ENCODE measurements at regions of chr12 and their contacts with region 1.

Region 1: DNA sequence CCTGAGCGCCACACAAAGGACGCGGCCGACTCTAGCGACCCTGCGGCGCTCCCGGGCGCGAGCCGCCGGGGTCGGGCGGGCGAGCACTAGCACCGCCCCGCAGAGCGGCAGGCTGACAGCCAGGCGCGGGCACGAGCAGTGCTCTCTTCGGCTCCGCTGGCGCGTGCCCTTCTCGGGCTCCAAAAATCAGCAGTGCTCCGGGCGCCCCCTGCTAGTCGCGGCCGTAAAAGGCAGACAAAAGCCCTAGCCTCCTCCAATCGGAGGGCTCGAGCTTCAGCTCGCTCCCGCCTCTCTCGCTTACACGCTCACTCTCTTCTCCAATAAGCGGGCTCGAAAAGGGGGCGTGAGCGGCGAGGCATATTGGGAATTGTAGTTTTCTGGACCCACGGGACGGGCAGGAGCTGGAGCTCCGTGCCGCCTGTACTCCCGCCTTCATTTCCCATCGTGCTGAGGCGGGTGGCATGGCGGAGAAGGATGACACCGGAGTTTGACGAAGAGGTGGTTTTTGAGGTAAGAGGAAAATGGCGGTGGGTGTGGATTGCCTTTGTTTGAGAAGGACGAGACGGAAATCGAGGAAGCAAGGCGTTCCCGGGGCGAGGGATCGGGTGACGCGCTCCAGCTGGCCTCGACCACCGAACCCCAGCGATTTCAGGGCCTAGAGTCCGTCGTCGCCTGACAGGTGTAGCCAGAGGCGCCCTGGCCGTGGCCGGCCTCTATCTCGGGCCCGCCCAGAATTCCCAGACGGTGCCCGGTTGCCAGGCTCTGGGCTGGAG is at the starts of genes FGD6 and VEZT:
- DNase-seq: peak; percentile 96 to 98 (median 97)
- ATAC-seq: peak; percentile 93
- H3K4me3 ChIP-seq: peak within 1 kb of the TSS; percentile 70
- H3K27ac ChIP-seq: peak within 1 kb of the TSS; percentile 81
- H3K4me1 ChIP-seq: peaks cover 8 to 14% of the 10 kb centered on the region in 2 experiments
- H3K27me3 ChIP-seq: no peaks in the 10 kb centered on the region
- CTCF ChIP-seq: peak; percentile 78 to 94 (median 82)
- EP300 ChIP-seq: no peak
- POLR2A ChIP-seq: peak; percentile 85
- RAD21 ChIP-seq: peak; percentile 90 to 99
- polyA plus RNA-seq, gene FGD6: 1.5 to 2.1 TPM
- polyA plus RNA-seq, gene VEZT: 16.1 to 29.1 TPM

Region 2: GRCh38 chr12:95130096-95130495 is 87.5 kb before region 1 on chr12:
- CTCF ChIA-PET with region 1: no interaction called
- POLR2A ChIA-PET with region 1: no interaction called
- in situ Hi-C with region 1: loop called (anchors 5 kb)
- intact Hi-C with region 1: loop called (anchors 5 kb)
- DNase-seq: no peak
- ATAC-seq: no peak
- H3K4me3 ChIP-seq: no peak overlapping the region
- H3K27ac ChIP-seq: no peak overlapping the region
- H3K4me1 ChIP-seq: no peaks in the 10 kb centered on the region
- H3K27me3 ChIP-seq: no peaks in the 10 kb centered on the region
- CTCF ChIP-seq: no peak
- EP300 ChIP-seq: no peak
- POLR2A ChIP-seq: no peak
- RAD21 ChIP-seq: no peak

Region 3: DNA sequence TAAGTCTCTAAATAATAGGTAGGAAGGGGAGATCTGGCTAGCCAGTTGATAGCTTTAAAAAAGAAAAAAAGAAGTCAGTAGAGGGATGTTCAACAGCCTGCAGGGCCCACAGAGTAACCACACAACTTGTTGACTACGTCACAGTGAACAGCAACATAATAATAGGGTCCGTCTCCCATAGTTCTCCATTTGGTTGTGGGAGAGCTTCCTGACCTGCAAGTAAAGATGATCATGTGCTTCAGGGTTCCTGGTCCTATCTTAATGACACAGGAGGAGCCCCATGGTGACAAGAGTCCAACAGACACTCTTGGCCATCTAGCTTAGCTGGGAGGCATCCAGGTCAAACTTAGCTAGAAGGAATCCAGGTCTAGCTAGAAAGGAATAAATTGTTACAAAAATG is 36.5 kb before region 1 on chr12:
- CTCF ChIA-PET with region 1: no interaction called
- POLR2A ChIA-PET with region 1: no interaction called
- in situ Hi-C with region 1: no loop called
- intact Hi-C with region 1: loop called (anchors 2 kb)
- DNase-seq: peak; percentile 37 to 89 (median 60)
- ATAC-seq: peak; percentile 78
- H3K4me3 ChIP-seq: no peak overlapping the region
- H3K27ac ChIP-seq: peak overlapping the region; percentile 70
- H3K4me1 ChIP-seq: peaks cover 18 to 43% of the 10 kb centered on the region in 2 experiments
- H3K27me3 ChIP-seq: no peaks in the 10 kb centered on the region
- CTCF ChIP-seq: no peak
- EP300 ChIP-seq: peak; percentile 73; the same call in 1 of the 2 replicates
- POLR2A ChIP-seq: no peak
- RAD21 ChIP-seq: no peak

Region 4: DNA sequence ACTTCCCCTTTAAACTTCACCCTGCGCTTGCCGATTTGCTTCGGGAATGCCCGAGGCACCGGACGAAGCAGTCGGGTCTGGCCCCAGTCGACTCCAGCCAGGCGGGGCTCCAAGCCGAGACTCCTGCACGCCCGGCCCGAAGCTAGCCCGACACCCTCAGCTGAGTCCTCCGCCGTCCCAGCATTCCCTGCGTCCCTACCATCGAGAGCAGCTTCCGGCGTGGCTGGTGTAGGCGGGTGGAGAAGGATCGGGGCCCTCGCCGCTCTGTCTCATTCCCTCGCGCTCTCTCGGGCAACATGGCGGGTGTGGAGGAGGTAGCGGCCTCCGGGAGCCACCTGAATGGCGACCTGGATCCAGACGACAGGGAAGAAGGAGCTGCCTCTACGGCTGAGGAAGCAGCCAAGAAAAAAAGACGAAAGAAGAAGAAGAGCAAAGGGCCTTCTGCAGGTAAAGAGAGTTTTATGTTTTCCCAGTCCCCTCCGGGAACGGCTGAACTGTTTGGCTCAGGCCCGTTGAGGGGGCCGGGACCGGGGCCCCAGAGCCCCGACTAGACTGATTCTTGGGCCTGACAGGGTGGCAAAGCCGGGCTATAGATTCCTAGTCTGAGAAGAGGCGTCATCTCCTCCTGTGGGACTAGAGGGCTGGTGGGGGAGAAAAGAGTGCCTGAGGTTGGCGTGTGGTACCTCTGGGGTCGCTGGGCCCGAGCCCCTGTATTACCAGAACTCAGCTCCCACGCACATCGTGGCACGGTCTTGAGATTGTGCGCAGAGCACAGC is 256.5 kb after region 1 on chr12 and contains the start of gene METAP2:
- CTCF ChIA-PET with region 1: no interaction called
- POLR2A ChIA-PET with region 1: interaction called, 4 read pairs
- in situ Hi-C with region 1: no loop called
- intact Hi-C with region 1: loop called (anchors 10 kb)
- DNase-seq: peak; percentile 89 to 96 (median 92)
- ATAC-seq: peak; percentile 99
- H3K4me3 ChIP-seq: peak within 1 kb of the TSS; percentile 86
- H3K27ac ChIP-seq: peak within 1 kb of the TSS; percentile 87
- H3K4me1 ChIP-seq: peaks cover 0 to 4% of the 10 kb centered on the region in 2 experiments; a peak in 2 of 5 replicates
- H3K27me3 ChIP-seq: no peaks in the 10 kb centered on the region
- CTCF ChIP-seq: no peak
- EP300 ChIP-seq: no peak; the same call in 1 of the 2 replicates
- POLR2A ChIP-seq: peak; percentile 98
- RAD21 ChIP-seq: peak in 1 of 2 experiments; percentile 20; a peak in 1 of 4 replicates
- polyA plus RNA-seq, gene METAP2: 75.5 to 104 TPM

Measured in K562 (cell line).